Activated CD4-positive, alpha-beta T cell treated with anti-CD3 and anti-CD28 coated beads for 36 hours (primary cell): ENCODE measurements at regions of chr19 and their contacts with region 1.

Region 1: GRCh38 chr19:4791170-4792018 is at the start of gene FEM1A:
- DNase-seq: peak; percentile 99
- ATAC-seq: peak; percentile 97
- H3K4me3 Mint-ChIP-seq: peak within 1 kb of the TSS; percentile 84
- H3K27ac Mint-ChIP-seq: peak within 1 kb of the TSS; percentile 85
- H3K4me1 Mint-ChIP-seq: peaks cover 40% of the 10 kb centered on the region
- H3K27me3 Mint-ChIP-seq: no peaks in the 10 kb centered on the region
- total RNA-seq, gene FEM1A: 9.2 to 10.6 TPM

Region 2: GRCh38 chr19:4457654-4458395 is 333.6 kb before region 1 on chr19 and contains the start of gene UBXN6:
- CTCF ChIA-PET with region 1: no interaction called
- POLR2A ChIA-PET with region 1: no interaction called
- intact Hi-C with region 1: loop called in 1 of 2 experiments (anchors 1 kb)
- DNase-seq: peak; percentile 99
- ATAC-seq: peak; percentile 93
- H3K4me3 Mint-ChIP-seq: peak within 1 kb of the TSS; percentile 86
- H3K27ac Mint-ChIP-seq: peak within 1 kb of the TSS; percentile 86
- H3K4me1 Mint-ChIP-seq: peaks cover 19% of the 10 kb centered on the region
- H3K27me3 Mint-ChIP-seq: no peaks in the 10 kb centered on the region
- total RNA-seq, gene UBXN6: 32.9 to 38.4 TPM

Region 3: DNA sequence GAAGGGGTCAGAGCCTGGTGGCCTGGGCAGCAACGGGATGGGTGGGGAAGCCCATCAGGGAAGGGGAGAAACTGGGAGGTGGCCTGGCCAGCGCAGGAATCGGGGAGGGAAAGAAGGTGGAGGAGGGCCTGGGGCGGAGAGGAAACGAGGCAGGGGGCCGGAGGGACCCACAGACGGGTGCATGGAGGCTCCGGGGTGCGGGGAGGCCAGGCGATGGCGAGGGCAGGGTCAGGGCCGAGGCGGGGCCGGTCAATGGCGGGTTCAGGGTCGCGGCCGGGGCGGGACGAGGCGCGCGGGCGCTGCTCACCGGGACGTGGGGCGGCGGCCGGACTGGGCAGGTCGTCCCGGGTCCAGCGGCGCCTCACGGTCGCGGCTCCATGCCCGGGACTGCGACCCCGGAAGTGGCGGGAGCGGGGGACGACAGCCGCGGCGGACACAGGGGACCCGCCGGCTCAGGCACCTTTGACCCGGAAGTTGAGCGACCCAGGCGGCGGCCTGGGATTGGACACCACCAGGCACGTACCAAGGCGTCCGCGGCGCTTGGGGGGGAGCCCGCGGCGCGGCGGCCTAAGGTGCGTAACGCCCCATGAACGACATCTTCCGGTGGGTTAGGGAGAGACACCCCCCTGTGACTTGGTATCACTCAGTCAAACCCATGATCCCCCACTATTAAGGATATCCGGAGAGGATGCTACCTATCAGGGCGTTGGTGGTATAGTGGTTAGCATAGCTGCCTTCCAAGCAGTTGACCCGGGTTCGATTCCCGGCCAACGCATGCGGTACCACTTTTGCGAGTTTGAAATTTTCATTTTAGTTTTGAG is 67.8 kb before region 1 on chr19 and contains the start of gene DPP9:
- CTCF ChIA-PET with region 1: interaction called, 77 read pairs
- POLR2A ChIA-PET with region 1: interaction called, 13 read pairs
- intact Hi-C with region 1: loop called (anchors 1 kb)
- DNase-seq: peak; percentile 98
- ATAC-seq: peak; percentile 95
- H3K4me3 Mint-ChIP-seq: peak within 1 kb of the TSS; percentile 92
- H3K27ac Mint-ChIP-seq: peak within 1 kb of the TSS; percentile 93
- H3K4me1 Mint-ChIP-seq: peaks cover 26% of the 10 kb centered on the region
- H3K27me3 Mint-ChIP-seq: no peaks in the 10 kb centered on the region
- total RNA-seq, gene DPP9: 49.2 to 51.3 TPM

Region 4: DNA sequence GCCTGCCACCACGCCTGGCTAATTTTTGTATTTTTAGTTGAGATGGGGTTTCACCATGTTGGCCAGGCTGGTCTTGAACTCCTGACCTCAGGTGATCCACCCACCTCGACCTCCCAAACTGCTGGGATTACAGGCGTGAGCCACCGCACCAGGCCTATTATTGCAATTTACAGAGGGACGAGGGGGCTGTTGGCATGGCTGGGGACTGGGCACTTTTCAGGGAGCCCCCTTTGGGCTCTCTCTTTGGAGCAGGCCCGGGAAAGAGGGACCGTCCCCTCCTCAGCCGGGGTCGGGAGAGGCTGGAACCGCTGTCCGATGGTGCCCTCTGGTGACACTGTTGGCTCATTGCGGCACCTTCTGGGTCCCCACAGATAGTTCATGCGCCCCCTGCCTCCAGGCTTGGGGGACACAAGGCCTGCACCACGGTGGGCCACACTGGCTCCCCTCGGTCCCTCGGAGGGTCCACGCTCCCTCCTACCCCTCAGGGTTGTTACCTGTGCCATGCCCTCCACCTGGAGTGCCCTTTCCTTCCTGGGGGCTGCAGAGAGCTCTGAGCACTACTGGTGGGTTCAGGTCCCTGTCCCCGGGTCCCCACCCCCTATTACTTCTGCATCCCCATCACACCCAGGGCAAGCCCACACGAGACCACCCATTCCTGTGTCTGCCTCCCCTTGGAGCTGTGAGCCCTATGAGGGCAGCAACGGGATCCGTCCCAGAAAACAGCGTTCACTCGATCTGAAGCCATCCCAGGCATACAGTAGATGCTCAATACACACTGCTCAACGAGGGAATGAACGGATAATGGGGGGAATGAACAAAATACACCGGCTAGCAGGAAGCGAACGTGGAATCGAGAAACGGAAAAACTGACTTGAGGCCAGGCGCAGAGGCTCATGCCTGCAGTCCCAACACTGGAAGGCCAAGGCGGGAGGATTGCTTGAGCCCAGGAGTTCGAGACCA is 12.6 kb after region 1 on chr19:
- CTCF ChIA-PET with region 1: interaction called, 18 read pairs
- POLR2A ChIA-PET with region 1: interaction called, 4 read pairs
- intact Hi-C with region 1: no loop called
- DNase-seq: peak; percentile 85
- ATAC-seq: peak; percentile 95
- H3K4me3 Mint-ChIP-seq: no peak overlapping the region
- H3K27ac Mint-ChIP-seq: no peak overlapping the region
- H3K4me1 Mint-ChIP-seq: no peaks in the 10 kb centered on the region
- H3K27me3 Mint-ChIP-seq: no peaks in the 10 kb centered on the region

Region 5: DNA sequence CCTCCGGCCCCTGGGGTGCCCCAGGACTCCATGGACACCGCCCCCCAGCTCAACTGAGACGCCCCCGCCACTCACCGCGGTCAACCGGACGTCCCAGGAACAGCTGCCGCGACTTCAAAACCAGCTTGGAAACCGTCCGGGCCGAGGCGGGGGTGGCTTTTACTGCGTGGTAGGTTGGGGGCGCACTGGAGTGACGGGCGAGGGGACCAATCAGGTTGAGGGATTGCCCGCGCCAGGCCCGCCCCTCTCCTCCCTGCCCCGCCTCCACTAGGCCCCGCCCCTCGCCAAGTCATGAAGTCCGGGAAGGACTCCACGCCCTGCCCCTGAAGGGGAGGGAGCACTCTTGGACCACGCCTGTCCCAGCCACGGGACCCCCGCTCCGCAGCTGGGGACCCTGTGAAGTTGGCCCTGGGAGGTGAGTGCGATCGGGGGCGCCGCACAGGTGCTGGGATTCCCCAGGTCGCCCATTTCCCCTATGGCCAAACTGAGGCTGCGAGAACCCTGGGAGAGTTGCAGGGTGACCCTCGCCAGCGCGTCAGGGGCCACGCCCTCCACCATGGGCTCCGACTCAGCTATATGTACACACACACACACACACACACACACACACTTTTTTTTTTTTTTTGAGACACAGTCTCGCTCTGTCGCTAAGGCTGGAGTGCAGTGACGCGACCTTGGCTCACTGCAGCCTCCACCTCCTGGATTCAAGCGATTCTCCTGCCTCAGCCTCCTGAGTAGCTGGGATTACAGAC is 76.3 kb after region 1 on chr19 and contains the start of gene PLIN3:
- CTCF ChIA-PET with region 1: interaction called, 5 read pairs
- POLR2A ChIA-PET with region 1: no interaction called
- intact Hi-C with region 1: loop called in 1 of 2 experiments (anchors 1 kb)
- DNase-seq: peak; percentile 98
- ATAC-seq: peak; percentile 95
- H3K4me3 Mint-ChIP-seq: peak within 1 kb of the TSS; percentile 73
- H3K27ac Mint-ChIP-seq: peak within 1 kb of the TSS; percentile 63
- H3K4me1 Mint-ChIP-seq: peaks cover 20% of the 10 kb centered on the region
- H3K27me3 Mint-ChIP-seq: peaks cover 2% of the 10 kb centered on the region
- total RNA-seq, gene PLIN3: 26.9 to 27.5 TPM

Region 6: DNA sequence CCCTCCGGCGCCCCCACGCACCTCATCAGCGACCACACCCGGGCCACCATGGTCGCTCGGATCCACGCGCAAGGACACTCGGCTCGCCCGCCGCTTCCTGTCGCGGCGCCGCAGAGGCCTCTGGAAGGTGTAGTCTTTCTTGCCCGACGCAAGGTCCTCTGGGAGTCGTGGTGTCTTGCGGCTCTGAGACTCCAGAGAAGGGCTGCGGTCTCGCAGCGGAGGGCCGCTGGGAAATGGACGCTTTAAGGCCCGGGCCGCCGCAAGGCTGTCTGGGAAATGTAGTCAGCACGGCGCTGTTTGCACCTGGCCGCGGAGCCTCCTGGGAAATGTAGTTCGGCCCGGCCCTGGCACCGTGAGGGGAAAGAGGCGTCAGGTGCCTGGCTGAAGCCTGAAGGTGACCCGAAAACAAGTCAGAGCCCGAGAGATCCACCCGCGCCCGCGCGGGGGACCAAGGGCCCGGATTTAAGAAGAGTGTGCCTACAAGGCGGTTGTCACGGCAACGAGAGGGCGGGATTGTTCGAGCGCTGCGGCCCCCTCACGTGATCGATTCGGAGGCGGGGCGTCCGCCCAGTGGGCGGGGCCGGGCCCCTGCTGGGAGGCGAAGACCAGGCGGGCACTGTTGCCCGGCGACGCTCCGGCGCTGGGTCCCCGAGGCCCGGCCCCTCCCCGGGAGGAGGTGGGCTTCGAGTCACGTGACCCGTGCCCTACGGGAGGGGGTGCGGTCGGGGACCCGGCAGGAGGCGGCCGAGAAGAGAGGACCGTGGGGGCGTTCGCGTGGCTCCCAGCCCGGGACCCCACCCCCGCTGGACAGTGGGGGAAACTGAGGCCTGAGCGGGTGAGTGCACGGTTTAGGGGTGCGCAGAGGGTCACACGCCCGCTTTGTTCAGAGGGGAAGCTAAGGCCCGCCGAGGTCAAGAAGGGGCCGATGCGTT is 889.3 kb after region 1 on chr19 and contains the starts of genes HSD11B1L and MICOS13:
- CTCF ChIA-PET with region 1: no interaction called
- POLR2A ChIA-PET with region 1: no interaction called
- intact Hi-C with region 1: loop called in 1 of 2 experiments (anchors 1 kb)
- DNase-seq: peak; percentile 99
- ATAC-seq: peak; percentile 97
- H3K4me3 Mint-ChIP-seq: peak within 1 kb of the TSS; percentile 99
- H3K27ac Mint-ChIP-seq: peak within 1 kb of the TSS; percentile 94
- H3K4me1 Mint-ChIP-seq: peaks cover 20% of the 10 kb centered on the region
- H3K27me3 Mint-ChIP-seq: no peaks in the 10 kb centered on the region
- total RNA-seq, gene HSD11B1L: 2.0 to 3.2 TPM
- total RNA-seq, gene MICOS13: 50.9 to 52.1 TPM